ENCODE measurements at regions of chr11 and their contacts with region 1.

Region 1: DNA sequence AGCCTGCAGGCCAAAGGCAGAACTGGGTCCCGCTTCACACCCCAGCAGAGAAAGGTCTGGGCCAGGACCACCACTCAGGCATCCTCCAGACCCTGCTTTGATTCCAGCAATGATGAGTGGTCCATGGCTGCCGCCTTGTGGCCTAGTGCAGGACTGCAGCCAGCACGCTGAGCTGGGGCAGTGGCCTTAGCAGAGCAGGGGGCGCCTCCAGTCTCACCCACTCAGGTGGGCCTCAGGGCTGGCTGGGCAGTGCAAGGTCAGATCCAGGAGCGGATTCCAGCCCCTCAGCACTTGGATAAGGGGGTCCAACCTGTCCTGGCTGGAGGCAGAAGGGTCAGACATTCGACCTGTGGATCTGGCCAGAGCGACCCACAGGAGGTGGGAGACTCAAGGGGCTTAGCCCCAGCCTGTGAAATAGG is 9.6 kb upstream of the PDE2A start:
- DNase-seq: peak; percentile 69
- H3K4me3 ChIP-seq: no peak overlapping the region
- H3K27ac ChIP-seq: no peak overlapping the region
- H3K4me1 ChIP-seq: no peaks in the 10 kb centered on the region
- H3K27me3 ChIP-seq: peaks cover 1% of the 10 kb centered on the region
- CTCF ChIP-seq: peak; percentile 92

Region 2: DNA sequence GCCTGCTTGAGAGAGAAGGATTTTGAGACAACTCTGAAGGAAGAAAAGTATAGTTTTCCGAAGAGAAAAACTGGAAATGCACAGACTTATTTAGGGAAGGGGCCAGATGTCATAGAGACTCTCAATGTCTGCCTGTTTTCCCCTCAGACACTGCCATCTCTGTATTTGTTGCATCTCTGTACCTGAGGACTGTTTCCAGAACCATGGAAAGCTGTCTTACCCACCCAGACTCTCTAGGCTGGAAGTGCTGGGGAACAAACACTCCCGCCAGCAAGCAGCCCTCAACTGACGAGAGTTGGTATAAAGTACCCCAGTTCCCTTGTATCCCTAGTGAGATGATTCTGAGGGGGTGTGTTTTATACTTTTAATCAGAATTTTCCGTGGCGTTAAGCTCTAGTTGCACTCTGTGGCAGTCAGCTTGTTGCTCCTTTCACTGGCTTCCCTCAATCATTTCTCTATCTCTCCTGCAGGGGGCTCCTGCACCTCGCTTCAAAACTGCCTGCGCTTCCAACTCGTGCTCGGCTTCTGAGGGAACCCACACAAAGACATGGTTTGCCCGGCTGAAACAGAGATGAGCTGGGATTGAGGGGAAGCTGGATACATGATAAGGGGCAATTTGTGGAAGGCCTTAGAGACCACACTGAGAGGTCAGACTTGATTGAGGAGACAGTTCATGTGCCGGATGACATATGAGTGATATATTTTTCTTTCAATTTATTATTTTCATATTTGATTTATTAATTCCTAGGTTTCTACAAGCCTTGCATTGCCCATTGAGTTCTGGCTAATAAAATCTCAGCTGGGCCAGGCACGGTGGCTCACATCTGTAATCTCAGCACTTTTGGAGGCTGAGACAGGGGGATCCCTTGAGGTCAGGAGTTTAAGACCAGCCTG is 212.5 kb before region 1 on chr11:
- intact Hi-C with region 1: loop called (anchors 10 kb)
- DNase-seq: peak; percentile 57
- H3K4me3 ChIP-seq: no peak overlapping the region
- H3K27ac ChIP-seq: no peak overlapping the region
- H3K4me1 ChIP-seq: no peaks in the 10 kb centered on the region
- H3K27me3 ChIP-seq: no peaks in the 10 kb centered on the region
- CTCF ChIP-seq: peak; percentile 75

Measured in colonic mucosa (tissue), 4 donors.